PC-9 (cell line): ENCODE measurements at regions of chr11 and their contacts with region 1.

Region 1: DNA sequence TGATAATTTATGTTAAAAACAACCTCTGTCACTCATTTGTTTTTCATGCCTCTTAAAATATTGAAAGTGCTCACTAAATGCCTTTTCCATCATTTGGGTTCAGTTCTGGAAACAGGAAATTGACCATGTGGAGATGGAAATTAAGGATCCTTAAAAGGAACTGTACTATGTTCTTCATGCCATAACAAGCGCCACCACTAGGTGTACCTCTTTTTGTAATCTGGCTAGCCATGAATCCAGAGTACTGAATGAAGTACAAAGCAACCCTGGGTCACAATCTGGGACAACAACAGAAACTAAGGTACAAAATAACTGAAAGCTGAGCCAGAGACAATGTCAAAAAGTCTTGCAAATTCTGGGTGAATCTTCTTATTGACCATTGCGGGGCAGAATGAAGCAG is 559.1 kb downstream of the FAM181B start:
- DNase-seq: no peak
- H3K4me3 ChIP-seq: no peak overlapping the region
- H3K27ac ChIP-seq: no peak overlapping the region
- H3K4me1 ChIP-seq: no peaks in the 10 kb centered on the region
- H3K27me3 ChIP-seq: no peaks in the 10 kb centered on the region
- CTCF ChIP-seq: peak; percentile 61

Region 2: GRCh38 chr11:81869351-81870065 is 305.1 kb before region 1 on chr11:
- CTCF ChIA-PET with region 1: no interaction called
- POLR2A ChIA-PET with region 1: no interaction called
- intact Hi-C with region 1: loop called (anchors 10 kb)
- DNase-seq: no peak
- H3K4me3 ChIP-seq: no peak overlapping the region
- H3K27ac ChIP-seq: no peak overlapping the region
- H3K4me1 ChIP-seq: no peaks in the 10 kb centered on the region
- H3K27me3 ChIP-seq: no peaks in the 10 kb centered on the region
- CTCF ChIP-seq: no peak